ENCODE measurements at regions of chr19 and their contacts with region 1.

Region 1: GRCh38 chr19:14354445-14354844 is 26.8 kb upstream of the ADGRE5 start:
- DNase-seq: no peak
- H3K4me3 Mint-ChIP-seq: no peak overlapping the region
- H3K27ac Mint-ChIP-seq: no peak overlapping the region
- H3K4me1 Mint-ChIP-seq: peaks cover 9% of the 10 kb centered on the region
- H3K27me3 Mint-ChIP-seq: peaks cover 6% of the 10 kb centered on the region
- CTCF ChIP-seq: no peak

Region 2: GRCh38 chr19:14198384-14199376 is 155.8 kb before region 1 on chr19:
- CTCF ChIA-PET with region 1: interaction called, 5 read pairs
- intact Hi-C with region 1: loop called (anchors 5 kb)
- DNase-seq: no peak
- H3K4me3 Mint-ChIP-seq: no peak overlapping the region
- H3K27ac Mint-ChIP-seq: no peak overlapping the region
- H3K4me1 Mint-ChIP-seq: peaks cover 9% of the 10 kb centered on the region
- H3K27me3 Mint-ChIP-seq: peaks cover 2% of the 10 kb centered on the region
- CTCF ChIP-seq: no peak